Activated naive CD4-positive, alpha-beta T cell treated with anti-CD3 and anti-CD28 coated beads for 36 hours (primary cell): ENCODE measurements at regions of chr13 and their contacts with region 1.

Region 1: DNA sequence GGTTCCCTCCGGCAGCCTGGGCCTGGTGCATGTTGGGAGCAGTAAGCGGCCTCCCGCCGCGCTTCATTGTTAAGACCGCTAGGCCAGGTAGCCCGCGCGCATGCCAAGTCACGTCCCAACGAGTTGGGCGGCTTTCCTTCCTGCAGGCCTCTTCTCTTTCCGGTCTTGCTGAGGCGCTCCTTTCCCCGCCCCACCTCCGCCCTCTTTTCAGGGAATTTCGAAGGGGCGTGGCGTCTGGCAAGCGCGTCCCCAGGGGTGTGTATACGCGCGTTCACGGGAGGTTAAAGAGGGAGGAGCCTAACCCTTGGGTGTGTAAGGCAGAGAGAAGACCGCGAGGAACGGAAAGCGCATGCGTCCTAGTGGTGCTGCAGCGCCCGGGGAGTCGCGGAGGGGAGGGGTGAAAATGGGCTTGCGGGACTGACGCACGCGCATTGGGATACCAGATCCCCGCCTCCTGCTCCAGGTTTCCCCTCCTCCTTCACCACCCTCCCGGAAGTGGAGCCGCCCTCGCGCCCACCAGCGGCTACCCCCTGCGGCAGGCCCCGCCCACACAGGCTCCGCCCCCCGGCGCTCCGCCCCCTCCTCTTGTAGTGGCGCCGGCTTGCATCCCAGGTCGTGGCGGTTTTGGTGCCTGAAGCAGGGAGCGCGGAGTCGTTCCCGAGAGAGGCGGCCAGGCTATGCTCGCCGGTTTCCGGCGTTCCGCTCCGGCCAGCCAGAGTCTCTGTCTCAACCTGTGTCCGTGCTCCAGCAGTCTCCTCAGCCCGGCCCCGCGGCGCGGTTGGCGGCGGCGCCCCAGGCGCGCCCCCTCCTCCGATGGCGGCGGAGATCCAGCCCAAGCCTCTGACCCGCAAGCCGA is at the start of gene WDFY2:
- DNase-seq: peak; percentile 99
- H3K4me3 Mint-ChIP-seq: peak within 1 kb of the TSS; percentile 88
- H3K27ac Mint-ChIP-seq: peak within 1 kb of the TSS; percentile 95
- H3K4me1 Mint-ChIP-seq: peaks cover 33% of the 10 kb centered on the region
- H3K27me3 Mint-ChIP-seq: no peaks in the 10 kb centered on the region
- total RNA-seq, gene WDFY2: 8.3 to 11.3 TPM

Region 2: DNA sequence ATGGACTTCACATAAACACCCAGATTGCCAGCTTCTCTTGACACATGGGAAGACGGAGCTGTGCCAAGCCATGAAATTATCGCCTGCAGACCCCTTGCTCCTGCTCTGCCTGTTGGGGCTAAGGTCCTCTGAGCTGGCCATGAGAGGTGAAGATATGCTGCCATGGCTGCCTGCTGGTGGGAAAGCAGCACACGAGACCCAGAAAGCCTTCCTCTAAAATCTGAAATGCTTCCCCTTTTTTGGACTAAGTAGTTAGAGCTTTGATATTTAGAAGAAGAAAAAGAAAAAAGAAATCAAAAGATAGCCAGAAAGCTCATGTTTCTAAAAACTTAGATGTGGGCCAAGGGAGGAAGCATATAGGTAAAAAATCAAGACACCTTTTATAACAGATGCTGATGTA is 11.3 kb after region 1 on chr13:
- CTCF ChIA-PET with region 1: interaction called, 10 read pairs
- intact Hi-C with region 1: no loop called
- DNase-seq: no peak
- H3K4me3 Mint-ChIP-seq: no peak overlapping the region
- H3K27ac Mint-ChIP-seq: no peak overlapping the region
- H3K4me1 Mint-ChIP-seq: peaks cover 32% of the 10 kb centered on the region
- H3K27me3 Mint-ChIP-seq: no peaks in the 10 kb centered on the region

Region 3: DNA sequence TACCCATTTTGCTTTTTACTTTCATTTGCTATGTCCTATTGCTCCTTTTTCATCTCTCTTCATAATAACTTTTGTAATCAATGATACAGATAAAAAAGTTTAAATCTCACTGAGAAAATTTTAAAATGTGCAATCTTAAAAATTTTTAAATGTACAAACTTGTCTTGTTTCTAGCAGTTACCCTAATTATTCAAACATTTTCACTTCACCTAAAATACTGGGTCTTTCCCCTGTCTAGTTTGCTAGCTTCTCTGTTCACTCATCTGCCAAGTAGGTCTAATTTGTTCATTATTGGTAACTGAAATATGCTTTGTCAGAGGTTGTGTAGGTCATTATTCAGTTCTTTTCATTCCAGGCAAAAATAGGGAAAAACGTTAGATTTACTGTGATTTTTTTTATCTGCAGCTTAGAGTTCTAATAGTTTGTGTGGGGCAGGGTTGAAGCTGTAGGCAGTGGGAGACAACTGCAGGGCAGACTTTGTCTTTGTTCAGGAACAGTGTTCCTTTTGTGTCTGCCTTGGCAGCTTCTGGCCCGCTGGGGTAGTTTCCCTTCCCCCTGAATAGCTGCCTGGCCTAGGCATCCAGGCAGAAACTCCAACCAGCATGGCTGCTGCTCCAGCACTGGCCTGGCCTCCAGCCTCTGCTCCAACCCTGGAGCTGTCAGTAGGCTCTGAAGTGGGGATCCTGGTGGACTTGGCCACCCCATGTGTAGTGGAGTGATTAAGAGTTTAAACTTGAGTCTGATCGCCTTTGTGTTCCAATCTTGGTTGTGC is 48.7 kb after region 1 on chr13:
- CTCF ChIA-PET with region 1: no interaction called
- intact Hi-C with region 1: loop called (anchors 5 kb)
- DNase-seq: no peak
- H3K4me3 Mint-ChIP-seq: no peak overlapping the region
- H3K27ac Mint-ChIP-seq: no peak overlapping the region
- H3K4me1 Mint-ChIP-seq: peaks cover 57% of the 10 kb centered on the region
- H3K27me3 Mint-ChIP-seq: no peaks in the 10 kb centered on the region

Region 4: GRCh38 chr13:51764184-51765141 is 180.4 kb after region 1 on chr13:
- CTCF ChIA-PET with region 1: no interaction called
- intact Hi-C with region 1: loop called (anchors 1 kb)
- DNase-seq: peak; percentile 84
- H3K4me3 Mint-ChIP-seq: peak overlapping the region; percentile 73
- H3K27ac Mint-ChIP-seq: peak overlapping the region; percentile 82
- H3K4me1 Mint-ChIP-seq: peaks cover 35% of the 10 kb centered on the region
- H3K27me3 Mint-ChIP-seq: no peaks in the 10 kb centered on the region

Region 5: GRCh38 chr13:51825165-51825592 is 241.1 kb after region 1 on chr13:
- CTCF ChIA-PET with region 1: interaction called, 3 read pairs
- intact Hi-C with region 1: loop called (anchors 1 kb)
- DNase-seq: no peak
- H3K4me3 Mint-ChIP-seq: peak overlapping the region; percentile 77
- H3K27ac Mint-ChIP-seq: peak overlapping the region; percentile 98
- H3K4me1 Mint-ChIP-seq: peaks cover 84% of the 10 kb centered on the region
- H3K27me3 Mint-ChIP-seq: no peaks in the 10 kb centered on the region

Region 6: DNA sequence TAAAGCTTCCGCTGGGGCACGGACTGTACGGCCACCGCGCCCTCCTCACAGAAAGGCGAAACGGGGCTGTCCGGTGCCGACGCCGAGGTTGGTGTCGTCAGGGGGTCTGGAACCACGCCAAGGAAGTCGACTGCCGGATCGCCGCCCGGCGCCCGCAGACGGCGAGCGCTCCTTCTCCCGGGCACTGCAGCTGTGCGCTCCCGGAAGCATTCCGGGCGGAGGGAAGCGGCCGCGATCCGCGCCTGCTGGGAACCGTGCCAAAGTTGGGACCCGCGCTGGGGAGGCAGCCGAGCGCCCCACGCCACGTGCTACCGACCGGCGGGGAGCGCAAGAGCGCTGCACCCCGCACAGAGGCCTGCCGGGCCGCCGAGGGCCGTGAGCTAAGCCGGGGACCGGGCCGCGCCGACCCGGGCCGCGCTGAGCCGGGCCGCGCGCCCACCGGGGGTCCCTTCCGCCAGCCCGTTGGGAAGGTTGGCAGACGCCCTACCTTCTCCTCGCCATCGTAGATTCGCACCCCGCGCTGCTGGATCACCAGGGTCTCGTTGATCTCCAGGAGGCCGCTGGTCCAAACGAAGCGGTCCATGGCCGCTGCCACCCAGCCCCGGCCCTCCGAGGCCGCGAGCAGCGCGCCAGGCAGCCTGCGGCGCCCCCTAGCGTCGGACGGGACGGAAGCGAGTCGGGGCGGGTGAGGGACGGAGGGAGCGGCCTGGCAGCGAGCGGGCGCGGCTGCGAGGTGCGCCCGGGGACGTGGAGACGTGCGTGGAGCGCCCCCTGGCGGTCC is 866.1 kb after region 1 on chr13 and contains the start of gene VPS36:
- CTCF ChIA-PET with region 1: no interaction called
- intact Hi-C with region 1: loop called (anchors 2 kb)
- DNase-seq: peak; percentile 94
- H3K4me3 Mint-ChIP-seq: peak within 1 kb of the TSS; percentile 92
- H3K27ac Mint-ChIP-seq: peak within 1 kb of the TSS; percentile 86
- H3K4me1 Mint-ChIP-seq: peaks cover 30% of the 10 kb centered on the region
- H3K27me3 Mint-ChIP-seq: no peaks in the 10 kb centered on the region
- total RNA-seq, gene VPS36: 25.3 to 32.0 TPM